CD4-positive, alpha-beta memory T cell (primary cell): ENCODE measurements at regions of chr11 and their contacts with region 1.

Region 1: GRCh38 chr11:9613118-9613829 is 39.8 kb downstream of the WEE1 start:
- DNase-seq: peak; percentile 78 to 85 (median 79)
- H3K4me3 ChIP-seq: peak overlapping the region; percentile 40 to 67
- H3K4me3 Mint-ChIP-seq: peak overlapping the region; percentile 91 to 100 (median 97)
- H3K27ac ChIP-seq: peak overlapping the region; percentile 88
- H3K27ac Mint-ChIP-seq: peak overlapping the region; percentile 94 to 100 (median 98)
- H3K4me1 ChIP-seq: peaks cover 16% of the 10 kb centered on the region
- H3K4me1 Mint-ChIP-seq: peaks cover 12 to 20% (median 14%) of the 10 kb centered on the region in 4 donors
- H3K27me3 ChIP-seq: no peaks in the 10 kb centered on the region
- H3K27me3 Mint-ChIP-seq: no peaks in the 10 kb centered on the region

Region 2: GRCh38 chr11:9170450-9170849 is 442.8 kb before region 1 on chr11:
- CTCF ChIA-PET with region 1: no interaction called
- POLR2A ChIA-PET with region 1: no interaction called
- intact Hi-C with region 1: loop called (anchors 1 kb)
- DNase-seq: no peak
- H3K4me3 ChIP-seq: no peak overlapping the region
- H3K4me3 Mint-ChIP-seq: no peak overlapping the region
- H3K27ac ChIP-seq: no peak overlapping the region
- H3K27ac Mint-ChIP-seq: peak overlapping the region in 1 of 7 donors; percentile 69
- H3K4me1 ChIP-seq: no peaks in the 10 kb centered on the region
- H3K4me1 Mint-ChIP-seq: peaks cover 0 to 8% (median 4%) of the 10 kb centered on the region in 4 donors
- H3K27me3 ChIP-seq: no peaks in the 10 kb centered on the region
- H3K27me3 Mint-ChIP-seq: no peaks in the 10 kb centered on the region

Region 3: GRCh38 chr11:9534791-9535781 is 78.2 kb before region 1 on chr11:
- CTCF ChIA-PET with region 1: interaction called, 267 read pairs
- POLR2A ChIA-PET with region 1: interaction called, 37 read pairs
- intact Hi-C with region 1: no loop called
- DNase-seq: peak; percentile 63 to 73 (median 66)
- H3K4me3 ChIP-seq: no peak overlapping the region
- H3K4me3 Mint-ChIP-seq: no peak overlapping the region
- H3K27ac ChIP-seq: no peak overlapping the region
- H3K27ac Mint-ChIP-seq: peak overlapping the region in 2 of 7 donors; percentile 7 to 43
- H3K4me1 ChIP-seq: no peaks in the 10 kb centered on the region
- H3K4me1 Mint-ChIP-seq: peaks cover 0 to 2% (median 0%) of the 10 kb centered on the region in 4 donors
- H3K27me3 ChIP-seq: no peaks in the 10 kb centered on the region
- H3K27me3 Mint-ChIP-seq: no peaks in the 10 kb centered on the region

Region 4: DNA sequence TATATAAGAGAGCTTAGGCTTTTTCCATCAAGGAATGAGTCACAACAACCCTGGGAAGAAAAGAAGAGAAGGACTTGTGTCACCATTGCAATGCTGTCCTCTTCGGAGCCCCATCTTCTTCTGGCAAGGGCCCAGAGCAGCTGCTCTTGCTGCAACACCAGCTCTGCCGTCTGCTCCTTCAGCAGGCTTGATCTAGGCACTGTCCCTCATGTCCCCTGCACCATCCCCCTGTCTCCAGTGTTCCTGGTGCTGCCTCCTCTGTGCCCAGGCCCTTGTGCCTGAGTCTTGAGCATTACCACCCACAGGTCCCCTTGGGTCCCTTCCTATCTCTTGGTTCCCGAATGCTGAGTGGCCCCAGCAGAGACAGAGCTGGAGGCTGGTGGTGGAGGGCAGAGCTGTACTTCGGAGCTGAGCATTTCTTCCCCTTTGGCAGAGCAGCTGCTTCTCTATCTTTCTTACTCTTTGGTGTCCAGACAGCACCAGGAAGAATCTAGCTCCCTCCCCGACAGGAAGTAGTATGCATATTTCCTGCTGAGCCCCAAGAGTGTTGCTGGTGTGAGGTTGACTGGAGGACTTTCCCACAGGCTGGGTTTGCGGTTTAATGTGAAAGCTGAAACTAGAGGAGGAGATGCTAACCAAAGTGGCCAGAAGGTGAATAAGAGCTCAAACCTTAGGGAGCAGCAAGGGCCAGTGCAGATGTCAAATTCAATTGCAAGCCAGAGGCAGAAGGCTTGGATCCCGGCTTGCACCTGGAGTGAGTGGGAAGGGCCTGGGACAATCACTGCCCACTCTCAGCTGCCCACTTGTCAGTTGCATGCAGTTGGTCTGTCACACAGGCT is 12.0 kb before region 1 on chr11:
- CTCF ChIA-PET with region 1: interaction called, 83 read pairs
- POLR2A ChIA-PET with region 1: interaction called, 26 read pairs
- intact Hi-C with region 1: no loop called
- DNase-seq: peak; percentile 45 to 80 (median 59)
- H3K4me3 ChIP-seq: peak overlapping the region; percentile 5 to 42
- H3K4me3 Mint-ChIP-seq: peak overlapping the region; percentile 64 to 88 (median 76)
- H3K27ac ChIP-seq: peak overlapping the region; percentile 62
- H3K27ac Mint-ChIP-seq: peak overlapping the region; percentile 53 to 95 (median 90)
- H3K4me1 ChIP-seq: peaks cover 19% of the 10 kb centered on the region
- H3K4me1 Mint-ChIP-seq: peaks cover 15 to 32% (median 20%) of the 10 kb centered on the region in 4 donors
- H3K27me3 ChIP-seq: no peaks in the 10 kb centered on the region
- H3K27me3 Mint-ChIP-seq: no peaks in the 10 kb centered on the region

Region 5: GRCh38 chr11:9688716-9689511 is 75.6 kb after region 1 on chr11:
- CTCF ChIA-PET with region 1: no interaction called
- POLR2A ChIA-PET with region 1: no interaction called
- intact Hi-C with region 1: no loop called
- DNase-seq: no peak
- H3K4me3 ChIP-seq: no peak overlapping the region
- H3K4me3 Mint-ChIP-seq: no peak overlapping the region
- H3K27ac ChIP-seq: no peak overlapping the region
- H3K27ac Mint-ChIP-seq: no peak overlapping the region
- H3K4me1 ChIP-seq: no peaks in the 10 kb centered on the region
- H3K4me1 Mint-ChIP-seq: no peaks in the 10 kb centered on the region
- H3K27me3 ChIP-seq: no peaks in the 10 kb centered on the region
- H3K27me3 Mint-ChIP-seq: no peaks in the 10 kb centered on the region

Region 6: DNA sequence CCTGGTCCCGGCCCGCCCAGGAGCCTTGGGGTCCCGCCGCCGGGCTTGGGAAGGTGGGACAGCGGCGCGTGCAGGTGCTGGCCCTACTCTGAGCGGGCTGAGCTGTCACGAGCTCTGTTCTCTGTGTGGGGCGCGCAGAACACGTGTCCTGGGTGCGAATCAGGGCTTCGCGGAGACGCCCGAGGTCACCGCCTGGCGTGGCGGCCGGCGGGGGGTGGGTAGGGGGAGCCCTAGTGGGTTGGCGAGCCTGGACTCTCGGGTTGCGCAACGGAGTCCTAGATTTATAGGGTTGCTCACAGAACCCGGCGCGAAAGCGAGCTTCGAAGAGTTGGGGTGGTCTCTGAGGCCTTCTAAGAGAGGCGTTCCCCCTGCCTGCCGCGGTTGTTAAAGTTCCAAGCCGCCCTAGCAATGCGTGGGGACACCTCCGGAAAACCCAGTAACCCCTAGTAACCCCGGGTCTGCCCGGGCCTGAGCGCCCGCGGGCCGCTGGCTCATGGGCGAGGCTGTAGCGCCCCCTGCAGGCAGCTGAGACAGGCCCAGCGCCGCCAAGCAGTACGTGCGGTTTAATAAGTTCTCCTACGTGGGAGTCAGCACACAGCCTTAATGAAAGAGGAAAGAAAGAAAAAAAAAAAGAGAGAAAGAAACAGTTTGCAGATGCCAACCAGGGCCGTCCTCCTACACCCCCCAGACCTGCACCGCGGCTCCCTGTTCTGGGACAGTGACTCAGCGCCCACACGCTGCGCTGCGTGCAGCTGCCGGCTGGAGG is 694.4 kb after region 1 on chr11:
- CTCF ChIA-PET with region 1: interaction called, 5 read pairs
- POLR2A ChIA-PET with region 1: interaction called, 5 read pairs
- intact Hi-C with region 1: loop called (anchors 1 kb)
- DNase-seq: peak; percentile 81 to 86 (median 84)
- H3K4me3 ChIP-seq: peak overlapping the region; percentile 54 to 73
- H3K4me3 Mint-ChIP-seq: peak overlapping the region; percentile 69 to 98 (median 78)
- H3K27ac ChIP-seq: peak overlapping the region; percentile 28
- H3K27ac Mint-ChIP-seq: peak overlapping the region in 6 of 7 donors; percentile 7 to 88 (median 59)
- H3K4me1 ChIP-seq: peaks cover 52% of the 10 kb centered on the region
- H3K4me1 Mint-ChIP-seq: peaks cover 22 to 48% (median 35%) of the 10 kb centered on the region in 4 donors
- H3K27me3 ChIP-seq: peaks cover 19% of the 10 kb centered on the region
- H3K27me3 Mint-ChIP-seq: peaks cover 14 to 21% of the 10 kb centered on the region in 2 donors